Vagina (tissue), 2 donors: ENCODE measurements at regions of chr22 and their contacts with region 1.

Region 1: GRCh38 chr22:23305922-23306374 is 125.6 kb downstream of the BCR start:
- DNase-seq: peak in 1 of 2 donors; percentile 88
- H3K4me3 ChIP-seq: peak overlapping the region in 1 of 2 donors; percentile 16
- H3K27ac ChIP-seq: peak overlapping the region; percentile 87
- H3K4me1 ChIP-seq: peaks cover 22% of the 10 kb centered on the region
- H3K27me3 ChIP-seq: no peaks in the 10 kb centered on the region
- CTCF ChIP-seq: no peak
- POLR2A ChIP-seq: no peak

Region 2: GRCh38 chr22:22527312-22527711 is 778.6 kb before region 1 on chr22:
- intact Hi-C with region 1: no loop called
- DNase-seq: no peak
- H3K4me3 ChIP-seq: no peak overlapping the region
- H3K27ac ChIP-seq: no peak overlapping the region
- H3K4me1 ChIP-seq: no peaks in the 10 kb centered on the region
- H3K27me3 ChIP-seq: no peaks in the 10 kb centered on the region
- CTCF ChIP-seq: no peak
- POLR2A ChIP-seq: no peak

Region 3: DNA sequence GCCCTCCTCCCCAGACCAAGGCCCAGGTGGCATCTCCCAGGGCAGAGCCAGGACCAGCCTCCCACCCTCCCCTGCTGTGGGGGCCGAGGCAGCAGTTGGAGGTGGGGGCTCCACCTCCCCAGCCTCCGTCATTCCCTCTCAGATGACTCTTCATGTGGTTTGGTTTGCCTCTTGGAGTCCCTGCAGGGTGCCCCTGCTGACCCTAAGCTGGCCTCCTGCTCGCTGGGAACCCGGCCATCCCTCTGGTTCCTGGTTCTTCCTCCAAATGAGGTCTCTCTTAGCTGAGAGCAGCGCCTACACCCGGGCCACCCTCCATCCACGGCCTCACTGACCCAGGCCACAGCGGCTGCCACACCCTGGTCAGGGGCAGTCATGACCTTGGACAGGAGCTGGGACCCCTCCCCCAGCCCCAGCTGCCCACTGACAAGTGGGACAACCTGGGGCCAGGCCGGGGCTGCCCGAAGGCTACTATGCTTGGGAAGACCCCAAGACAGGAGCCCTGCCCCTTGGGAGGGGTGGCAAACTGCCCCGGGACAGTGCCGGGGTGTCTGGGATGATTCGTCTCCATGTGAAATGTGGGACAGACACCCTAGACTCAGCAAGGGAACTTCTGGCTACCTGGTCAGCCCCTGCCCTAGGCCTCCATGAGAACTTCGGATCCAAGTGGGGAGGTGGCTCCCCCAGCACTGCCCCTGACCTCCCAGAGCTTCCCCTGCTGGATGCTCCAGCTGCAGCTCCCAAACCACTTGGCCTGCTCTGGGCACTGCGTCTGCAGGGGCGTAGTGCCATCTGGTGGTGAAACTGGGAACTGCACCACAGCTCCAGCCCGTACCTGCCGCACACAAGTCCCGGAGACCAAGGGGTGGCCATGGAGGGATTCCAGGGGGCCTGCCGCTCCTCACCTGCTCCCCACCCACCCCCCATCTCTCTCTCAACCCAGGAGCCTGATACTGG is 79.6 kb after region 1 on chr22:
- intact Hi-C with region 1: loop called (anchors 10 kb)
- DNase-seq: no peak
- H3K4me3 ChIP-seq: no peak overlapping the region
- H3K27ac ChIP-seq: no peak overlapping the region
- H3K4me1 ChIP-seq: no peaks in the 10 kb centered on the region
- H3K27me3 ChIP-seq: no peaks in the 10 kb centered on the region
- CTCF ChIP-seq: peak; percentile 97 to 99 (median 99)
- POLR2A ChIP-seq: no peak